Heart left ventricle (tissue), 16 donors: ENCODE measurements at regions of chr15 and their contacts with region 1.

Region 1: DNA sequence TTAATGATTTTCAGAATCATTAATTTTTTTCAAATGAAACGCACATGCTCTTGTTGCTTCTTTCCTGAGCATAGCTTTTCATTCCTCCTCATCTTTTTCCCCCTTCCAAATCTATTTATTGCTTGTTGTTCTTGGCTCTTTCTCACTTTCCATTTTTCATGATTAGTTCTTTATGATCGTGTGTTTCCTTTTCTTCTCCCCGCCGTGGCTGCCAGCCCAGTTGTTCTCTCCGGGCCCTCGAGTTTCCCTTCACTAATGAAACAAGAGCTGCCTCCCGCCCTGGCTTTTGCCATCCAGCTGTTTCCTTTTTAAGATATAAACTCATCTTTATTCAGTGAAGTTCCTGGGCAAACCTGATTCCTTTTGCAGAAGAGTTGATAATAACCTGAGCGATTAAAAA is 170.2 kb upstream of the NR2F2 start:
- DNase-seq: peak; percentile 45 to 64 (median 55)
- ATAC-seq: peak in 2 of 4 donors; percentile 44 to 51
- H3K4me3 ChIP-seq: peak overlapping the region in 1 of 12 donors; percentile 13
- H3K27ac ChIP-seq: peak overlapping the region in 9 of 12 donors; percentile 0 to 51 (median 39)
- H3K4me1 ChIP-seq: peaks cover 0 to 30% (median 4%) of the 10 kb centered on the region in 12 donors
- H3K27me3 ChIP-seq: no peaks in the 10 kb centered on the region
- CTCF ChIP-seq: no peak
- POLR2A ChIP-seq: no peak

Region 2: DNA sequence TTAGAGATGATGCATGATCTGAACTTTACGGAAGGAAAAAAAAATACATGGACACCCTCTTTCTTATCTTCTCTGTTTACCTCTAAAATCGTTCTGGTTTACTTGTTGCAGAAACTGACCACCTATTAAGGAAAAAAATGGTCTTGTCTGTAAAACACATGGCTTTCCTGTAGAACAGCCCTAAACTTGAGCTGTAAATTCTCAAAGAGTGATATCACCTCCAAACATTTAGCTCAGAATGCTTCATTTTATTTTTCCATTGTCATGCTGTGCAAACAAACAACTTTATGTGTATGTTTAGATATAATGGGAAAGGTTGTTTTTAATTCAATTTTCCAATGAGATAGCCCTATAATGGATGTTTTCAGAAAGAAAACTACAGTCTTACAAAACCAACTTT is 67.2 kb before region 1 on chr15:
- intact Hi-C with region 1: loop called in 1 of 10 experiments (anchors 10 kb)
- DNase-seq: no peak
- ATAC-seq: no peak
- H3K4me3 ChIP-seq: no peak overlapping the region
- H3K27ac ChIP-seq: no peak overlapping the region
- H3K4me1 ChIP-seq: peaks cover 0 to 5% (median 0%) of the 10 kb centered on the region in 12 donors
- H3K27me3 ChIP-seq: no peaks in the 10 kb centered on the region
- CTCF ChIP-seq: no peak
- POLR2A ChIP-seq: no peak

Region 3: DNA sequence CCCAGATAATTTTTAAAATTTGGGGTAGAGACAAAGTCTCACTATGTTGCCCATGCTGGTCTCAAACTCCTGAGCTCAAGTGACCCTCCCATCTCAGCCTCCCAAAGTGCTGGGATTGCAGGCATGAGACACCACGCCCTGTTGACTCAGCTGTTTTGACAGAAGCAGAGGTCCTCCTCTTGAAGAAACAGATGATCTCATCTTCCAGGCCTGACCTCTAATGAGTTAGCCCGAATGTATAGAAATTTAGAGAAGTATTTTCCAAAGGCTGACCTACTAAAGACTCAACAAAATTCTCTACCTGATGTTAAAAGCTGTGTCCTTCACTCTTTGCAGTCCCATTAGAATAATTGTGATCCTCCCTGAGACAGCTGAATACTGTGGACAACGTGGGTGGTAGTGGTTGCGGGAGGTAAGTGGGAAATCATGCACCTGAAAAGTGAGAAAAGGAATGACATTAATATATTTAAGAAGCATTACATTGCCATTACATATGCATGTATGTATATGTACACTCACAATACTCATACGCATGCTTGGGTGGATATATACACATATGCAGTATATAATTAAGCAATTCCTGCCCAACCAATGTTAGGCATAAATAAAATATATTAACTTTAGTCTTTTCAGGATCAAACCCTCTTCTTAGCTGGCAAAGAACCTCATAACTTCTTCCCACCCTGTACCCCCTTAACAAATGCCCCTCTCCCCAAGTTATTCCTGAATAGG is 34.4 kb before region 1 on chr15:
- intact Hi-C with region 1: no loop called
- DNase-seq: no peak
- ATAC-seq: no peak
- H3K4me3 ChIP-seq: no peak overlapping the region
- H3K27ac ChIP-seq: no peak overlapping the region
- H3K4me1 ChIP-seq: no peaks in the 10 kb centered on the region
- H3K27me3 ChIP-seq: no peaks in the 10 kb centered on the region
- CTCF ChIP-seq: no peak
- POLR2A ChIP-seq: no peak

Region 4: DNA sequence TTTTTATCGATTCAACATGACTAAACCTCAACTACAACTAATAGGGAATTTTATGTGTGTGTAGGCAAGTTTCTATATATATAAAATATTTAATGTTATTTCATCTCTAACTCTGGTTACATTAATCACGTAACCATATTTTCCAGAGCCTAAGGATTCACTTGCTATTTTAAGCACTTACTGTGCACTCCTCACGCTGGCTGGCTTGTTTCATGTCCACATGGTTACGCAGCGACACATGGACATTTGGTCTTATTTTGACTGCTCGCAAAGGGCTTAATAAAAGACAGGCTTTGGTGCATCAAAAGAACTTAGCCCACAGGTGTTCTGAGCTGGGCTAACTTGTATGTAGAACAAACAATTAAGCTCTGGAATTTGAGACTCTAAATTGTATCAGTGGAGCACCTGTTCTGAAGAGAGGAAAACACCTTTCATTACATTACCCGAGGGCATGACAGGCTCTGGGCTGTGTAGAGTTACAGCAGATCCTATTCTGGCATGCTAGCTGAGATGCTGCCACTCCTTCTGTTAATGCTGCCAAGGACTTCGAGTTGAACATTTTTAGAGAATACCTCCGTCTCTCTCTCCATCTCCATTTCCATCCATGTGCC is 40.2 kb after region 1 on chr15:
- intact Hi-C with region 1: no loop called
- DNase-seq: no peak
- ATAC-seq: no peak
- H3K4me3 ChIP-seq: no peak overlapping the region
- H3K27ac ChIP-seq: no peak overlapping the region
- H3K4me1 ChIP-seq: no peaks in the 10 kb centered on the region
- H3K27me3 ChIP-seq: peaks cover 0 to 5% (median 0%) of the 10 kb centered on the region in 9 donors
- CTCF ChIP-seq: no peak
- POLR2A ChIP-seq: no peak

Region 5: DNA sequence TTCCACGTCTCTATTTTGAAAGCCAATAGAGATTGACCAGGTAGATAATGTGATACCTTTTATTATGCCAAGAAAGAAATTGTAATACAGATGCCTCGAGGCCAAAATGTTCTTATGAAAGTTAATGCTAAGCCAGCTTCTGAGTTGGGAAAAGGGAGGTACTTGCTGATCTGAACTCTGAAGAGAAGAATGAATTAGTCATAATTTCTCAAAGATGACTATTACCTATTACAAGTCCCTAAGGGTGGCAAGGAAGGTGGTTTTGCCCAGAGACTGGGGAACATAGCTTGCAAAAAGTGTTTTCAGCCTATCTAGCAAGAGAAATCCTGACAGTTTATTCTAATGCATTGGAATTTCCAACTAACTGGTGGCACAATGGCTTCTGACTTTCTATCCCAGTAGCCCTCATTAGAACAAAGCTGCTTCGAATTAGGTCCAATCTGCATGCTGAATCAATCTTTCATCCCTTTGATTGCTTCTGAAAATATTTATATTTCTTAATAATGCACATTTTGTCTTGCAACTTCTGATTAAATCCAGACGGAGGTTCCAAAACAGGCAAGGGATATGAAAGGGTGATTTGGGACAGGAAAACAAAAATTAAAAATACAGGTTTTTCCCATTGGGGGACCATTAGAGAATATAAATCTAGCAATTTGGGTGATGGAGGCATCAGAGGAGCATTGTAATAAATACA is 152.5 kb after region 1 on chr15:
- intact Hi-C with region 1: loop called in 1 of 10 experiments (anchors 10 kb)
- DNase-seq: no peak
- ATAC-seq: no peak
- H3K4me3 ChIP-seq: no peak overlapping the region
- H3K27ac ChIP-seq: no peak overlapping the region
- H3K4me1 ChIP-seq: peaks cover 0 to 29% (median 0%) of the 10 kb centered on the region in 12 donors
- H3K27me3 ChIP-seq: peaks cover 0 to 27% (median 3%) of the 10 kb centered on the region in 9 donors
- CTCF ChIP-seq: no peak
- POLR2A ChIP-seq: no peak

Region 6: DNA sequence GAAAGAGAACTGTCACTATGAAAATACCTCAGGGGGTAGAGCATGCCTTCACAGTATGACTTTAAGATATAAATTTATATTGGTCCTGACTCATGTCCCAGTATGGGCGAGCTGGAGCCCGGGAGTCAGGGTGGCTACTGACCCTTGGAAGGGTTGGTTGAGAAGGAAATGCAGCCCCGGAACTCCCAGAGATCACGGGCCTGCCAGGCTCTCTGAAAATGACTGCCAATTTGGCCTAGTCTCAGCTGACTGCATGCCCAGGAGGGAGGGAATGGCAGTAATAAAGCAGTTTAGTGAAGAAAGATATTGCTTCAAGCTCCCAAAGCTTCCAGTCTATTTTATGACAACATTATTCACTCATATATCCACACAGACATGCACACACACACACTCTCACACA is 469.2 kb after region 1 on chr15:
- intact Hi-C with region 1: no loop called
- DNase-seq: peak in 4 of 5 donors; percentile 20 to 51 (median 35)
- ATAC-seq: peak; percentile 71 to 92 (median 86)
- H3K4me3 ChIP-seq: no peak overlapping the region
- H3K27ac ChIP-seq: no peak overlapping the region
- H3K4me1 ChIP-seq: peaks cover 0 to 36% (median 14%) of the 10 kb centered on the region in 12 donors
- H3K27me3 ChIP-seq: no peaks in the 10 kb centered on the region
- CTCF ChIP-seq: no peak
- POLR2A ChIP-seq: no peak